ENCODE measurements at regions of chr2 and their contacts with region 1.

Region 1: DNA sequence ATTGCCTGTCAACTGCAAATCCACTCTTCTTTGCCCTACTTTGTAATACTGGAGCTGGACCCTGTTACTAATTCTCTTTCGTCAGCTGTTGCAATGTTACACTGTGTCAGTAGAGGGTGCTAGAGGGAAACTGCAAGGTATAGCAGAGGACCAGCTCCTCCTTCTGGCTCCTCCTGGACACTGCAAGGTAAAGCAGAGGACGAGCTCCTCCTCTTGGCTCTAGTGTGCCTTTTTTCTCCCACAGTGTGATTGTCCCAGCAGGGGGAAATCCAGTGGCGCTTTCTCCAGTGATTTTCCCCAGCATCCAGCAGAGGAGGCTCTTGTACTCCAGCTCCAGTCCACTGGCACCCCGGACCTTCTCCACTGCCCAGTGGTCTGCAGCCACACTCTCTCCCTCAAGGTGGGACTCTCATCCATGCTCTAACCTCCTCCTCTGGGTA is 95.6 kb downstream of the CAPN13 start:
- DNase-seq: peak; percentile 92
- H3K4me3 ChIP-seq: no peak overlapping the region
- H3K27ac ChIP-seq: no peak overlapping the region
- H3K4me1 ChIP-seq: peaks cover 2% of the 10 kb centered on the region
- H3K27me3 ChIP-seq: peaks cover 5% of the 10 kb centered on the region
- CTCF ChIP-seq: peak; percentile 99

Region 2: GRCh38 chr2:30098266-30099005 is 613.2 kb before region 1 on chr2:
- CTCF ChIA-PET with region 1: no interaction called
- POLR2A ChIA-PET with region 1: no interaction called
- intact Hi-C with region 1: loop called (anchors 5 kb)
- DNase-seq: no peak
- H3K4me3 ChIP-seq: no peak overlapping the region
- H3K27ac ChIP-seq: no peak overlapping the region
- H3K4me1 ChIP-seq: peaks cover 5% of the 10 kb centered on the region
- H3K27me3 ChIP-seq: no peaks in the 10 kb centered on the region
- CTCF ChIP-seq: no peak

Region 3: DNA sequence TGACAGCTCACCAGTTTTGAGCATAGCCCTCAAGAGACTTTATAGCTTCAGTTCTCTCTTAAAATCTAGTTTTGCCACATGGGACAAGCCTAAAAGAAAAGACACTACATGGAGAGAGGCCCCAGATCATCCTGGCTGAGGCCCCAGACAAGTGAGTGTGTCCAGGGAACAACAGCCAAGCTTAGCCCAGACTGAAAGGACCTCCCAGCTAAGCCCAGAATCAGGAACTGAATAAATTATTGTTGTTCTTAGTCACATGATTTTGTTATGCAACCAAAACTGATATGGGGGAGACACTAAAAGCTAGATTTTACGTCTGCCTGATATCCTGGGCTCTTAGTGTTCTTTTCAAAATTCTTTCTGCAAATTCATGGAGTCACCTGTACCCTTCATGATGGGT is 509.7 kb before region 1 on chr2:
- CTCF ChIA-PET with region 1: interaction called, 13 read pairs
- POLR2A ChIA-PET with region 1: no interaction called
- intact Hi-C with region 1: no loop called
- DNase-seq: no peak
- H3K4me3 ChIP-seq: no peak overlapping the region
- H3K27ac ChIP-seq: no peak overlapping the region
- H3K4me1 ChIP-seq: peaks cover 6% of the 10 kb centered on the region
- H3K27me3 ChIP-seq: no peaks in the 10 kb centered on the region
- CTCF ChIP-seq: no peak

Region 4: DNA sequence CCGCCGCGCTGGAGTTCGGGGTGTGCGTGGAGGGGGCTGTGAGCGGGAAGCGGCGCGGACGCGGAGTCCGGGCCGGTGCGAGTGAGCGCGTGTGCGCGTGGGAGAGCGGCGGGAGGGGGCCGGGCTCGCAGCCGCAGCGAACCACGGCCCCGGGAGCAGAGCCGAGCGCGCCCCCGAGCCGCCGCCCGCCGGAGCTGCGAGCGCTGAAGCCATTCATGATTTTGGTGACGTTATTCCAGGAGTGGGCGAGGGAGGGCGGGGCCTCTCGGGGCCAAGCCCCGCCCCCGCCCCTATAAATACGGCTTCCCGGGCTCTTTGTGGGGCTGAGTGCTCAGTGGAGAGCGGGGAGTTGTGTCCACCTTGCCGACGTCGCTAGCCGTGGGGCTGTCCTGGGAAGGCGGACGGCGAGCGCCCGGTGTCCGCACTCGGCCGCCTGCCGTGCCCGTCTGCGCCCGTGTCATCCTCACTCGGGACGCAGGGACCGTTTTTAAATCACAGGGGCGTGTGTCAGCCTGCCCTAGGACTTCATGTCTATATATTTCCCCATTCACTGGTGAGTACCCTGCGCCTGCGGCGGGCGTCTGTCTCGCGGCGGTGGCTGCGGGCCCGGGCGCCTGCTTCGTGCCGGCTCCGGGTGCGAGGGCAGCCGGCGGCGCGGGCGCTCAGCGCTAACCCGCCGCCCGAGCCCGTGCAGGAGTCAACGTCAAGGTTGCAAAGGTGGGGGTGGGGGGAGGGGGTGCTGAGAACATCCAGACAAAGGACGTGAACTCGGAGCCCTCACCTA is 480.3 kb before region 1 on chr2 and contains the start of gene LBH:
- CTCF ChIA-PET with region 1: interaction called, 18 read pairs
- POLR2A ChIA-PET with region 1: no interaction called
- intact Hi-C with region 1: no loop called
- DNase-seq: peak; percentile 92
- H3K4me3 ChIP-seq: peak within 1 kb of the TSS; percentile 81
- H3K27ac ChIP-seq: peak within 1 kb of the TSS; percentile 85
- H3K4me1 ChIP-seq: peaks cover 14% of the 10 kb centered on the region
- H3K27me3 ChIP-seq: no peaks in the 10 kb centered on the region
- CTCF ChIP-seq: no peak
- total RNA-seq, gene LBH: 114 and 140 TPM in 2 replicates

Region 5: DNA sequence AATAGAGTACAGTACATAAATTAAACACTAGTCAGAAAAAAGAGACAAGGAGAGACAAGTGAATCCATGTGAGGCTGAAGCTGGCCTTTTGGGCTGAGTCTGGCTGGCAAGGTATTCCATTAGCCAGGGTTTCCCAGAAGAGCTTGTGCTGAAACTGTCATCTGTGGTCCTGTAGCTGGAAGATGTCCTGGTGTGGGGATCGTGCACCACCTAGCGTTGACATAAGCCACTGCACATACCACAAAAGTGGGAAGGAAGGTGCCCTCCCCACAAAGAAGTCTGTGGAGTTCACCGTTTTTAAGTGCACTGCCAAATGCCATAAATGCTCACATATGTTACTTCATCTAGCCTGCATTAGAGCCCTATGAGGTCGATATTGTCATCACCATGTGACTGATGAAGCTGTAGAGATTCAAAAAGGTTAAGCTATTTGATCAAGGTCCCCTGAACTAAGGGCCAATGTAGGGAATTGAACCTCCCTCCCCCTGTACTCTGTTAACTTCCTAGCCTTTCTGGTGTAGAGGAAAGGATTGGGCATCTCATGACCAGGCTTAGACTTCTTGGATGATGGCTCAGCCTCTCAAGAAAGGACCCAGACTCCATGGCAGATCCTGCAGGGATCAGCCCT is 458.5 kb after region 1 on chr2:
- CTCF ChIA-PET with region 1: interaction called, 27 read pairs
- POLR2A ChIA-PET with region 1: no interaction called
- intact Hi-C with region 1: loop called (anchors 2 kb)
- DNase-seq: peak; percentile 72
- H3K4me3 ChIP-seq: no peak overlapping the region
- H3K27ac ChIP-seq: no peak overlapping the region
- H3K4me1 ChIP-seq: no peaks in the 10 kb centered on the region
- H3K27me3 ChIP-seq: peaks cover 6% of the 10 kb centered on the region
- CTCF ChIP-seq: peak; percentile 93

Region 6: GRCh38 chr2:31523871-31524492 is 812.3 kb after region 1 on chr2:
- CTCF ChIA-PET with region 1: no interaction called
- POLR2A ChIA-PET with region 1: no interaction called
- intact Hi-C with region 1: loop called (anchors 5 kb)
- DNase-seq: peak; percentile 72
- H3K4me3 ChIP-seq: no peak overlapping the region
- H3K27ac ChIP-seq: no peak overlapping the region
- H3K4me1 ChIP-seq: no peaks in the 10 kb centered on the region
- H3K27me3 ChIP-seq: peaks cover 16% of the 10 kb centered on the region
- CTCF ChIP-seq: peak; percentile 89

Measured in A673 (cell line).